Activated CD4-positive, alpha-beta T cell treated with anti-CD3 and anti-CD28 coated beads, Interleukin-2, amount 10 ng/mL, durations not matched to agents 24 days and 14 days (primary cell): ENCODE measurements at regions of chr20 and their contacts with region 1.

Region 1: GRCh38 chr20:57351042-57351783 is at the start of gene RAE1:
- DNase-seq: peak; percentile 98
- H3K4me3 Mint-ChIP-seq: peak within 1 kb of the TSS; percentile 95
- H3K27ac Mint-ChIP-seq: peak within 1 kb of the TSS; percentile 94
- H3K4me1 Mint-ChIP-seq: peaks cover 31% of the 10 kb centered on the region
- H3K27me3 Mint-ChIP-seq: peaks cover 6% of the 10 kb centered on the region
- total RNA-seq, gene RAE1: 58.2 and 63.4 TPM in 2 replicates

Region 2: GRCh38 chr20:56554869-56555268 is 796.3 kb before region 1 on chr20:
- intact Hi-C with region 1: loop called (anchors 1 kb)
- DNase-seq: peak; percentile 57
- H3K4me3 Mint-ChIP-seq: no peak overlapping the region
- H3K27ac Mint-ChIP-seq: peak overlapping the region; percentile 45
- H3K4me1 Mint-ChIP-seq: peaks cover 8% of the 10 kb centered on the region
- H3K27me3 Mint-ChIP-seq: peaks cover 3% of the 10 kb centered on the region

Region 3: DNA sequence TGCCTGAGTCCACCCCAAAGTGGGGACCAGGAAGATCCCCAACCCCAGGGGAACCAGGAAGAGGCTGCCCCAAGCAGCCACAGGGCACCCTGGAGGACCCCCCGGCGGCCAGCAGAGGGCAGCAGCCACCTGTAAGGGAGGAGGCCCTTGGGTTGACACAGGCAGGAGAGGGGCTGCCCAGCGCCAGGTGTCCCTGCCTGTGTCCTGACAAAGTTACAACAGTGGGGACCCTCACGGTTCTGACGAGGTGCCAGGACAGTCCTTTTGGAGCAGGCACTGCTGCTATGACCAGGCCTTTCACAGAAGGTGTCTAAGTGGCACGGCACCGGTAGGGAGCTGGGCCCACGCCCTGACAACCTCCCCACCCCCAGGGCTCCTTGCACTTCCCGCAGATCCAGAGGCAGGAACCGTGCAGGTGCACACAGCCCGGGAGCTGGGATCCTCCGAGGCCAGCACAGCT is 261.5 kb before region 1 on chr20:
- intact Hi-C with region 1: loop called (anchors 1 kb)
- DNase-seq: peak; percentile 89
- H3K4me3 Mint-ChIP-seq: no peak overlapping the region
- H3K27ac Mint-ChIP-seq: peak overlapping the region; percentile 81
- H3K4me1 Mint-ChIP-seq: peaks cover 11% of the 10 kb centered on the region
- H3K27me3 Mint-ChIP-seq: peaks cover 7% of the 10 kb centered on the region

Region 4: GRCh38 chr20:57335392-57335791 is 15.8 kb before region 1 on chr20:
- intact Hi-C with region 1: no loop called
- DNase-seq: no peak
- H3K4me3 Mint-ChIP-seq: no peak overlapping the region
- H3K27ac Mint-ChIP-seq: no peak overlapping the region
- H3K4me1 Mint-ChIP-seq: no peaks in the 10 kb centered on the region
- H3K27me3 Mint-ChIP-seq: peaks cover 33% of the 10 kb centered on the region

Region 5: GRCh38 chr20:57383447-57384347 is 32.5 kb after region 1 on chr20:
- intact Hi-C with region 1: loop called (anchors 2 kb)
- DNase-seq: no peak
- H3K4me3 Mint-ChIP-seq: no peak overlapping the region
- H3K27ac Mint-ChIP-seq: no peak overlapping the region
- H3K4me1 Mint-ChIP-seq: peaks cover 15% of the 10 kb centered on the region
- H3K27me3 Mint-ChIP-seq: no peaks in the 10 kb centered on the region

Region 6: DNA sequence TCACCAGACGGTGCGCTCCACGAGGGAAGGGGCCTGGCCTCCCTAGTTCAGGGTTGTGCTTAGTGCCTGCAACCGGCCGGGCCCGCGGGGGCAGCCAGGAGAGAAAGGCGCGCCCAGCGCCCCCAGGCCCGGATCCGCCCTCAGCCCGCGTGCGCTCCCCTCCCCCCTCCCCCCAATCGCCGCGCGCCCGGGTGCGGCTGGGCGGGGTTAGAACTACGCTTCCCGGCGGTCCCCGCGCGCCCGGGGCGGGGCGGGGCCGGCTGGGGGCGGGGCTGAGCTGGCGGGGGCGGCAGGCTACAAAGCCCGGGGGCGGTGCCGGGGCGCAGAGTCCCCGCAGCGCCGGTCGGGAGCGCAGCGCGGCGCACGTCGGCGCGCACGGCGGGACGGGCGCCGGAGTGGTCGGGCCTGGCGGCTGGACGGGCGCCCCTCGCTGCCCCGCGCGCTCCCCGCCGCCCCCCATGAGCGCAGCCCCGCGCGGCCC is 39.9 kb after region 1 on chr20 and contains the start of gene RBM38:
- intact Hi-C with region 1: loop called (anchors 1 kb)
- DNase-seq: peak; percentile 93
- H3K4me3 Mint-ChIP-seq: peak within 1 kb of the TSS; percentile 88
- H3K27ac Mint-ChIP-seq: peak within 1 kb of the TSS; percentile 98
- H3K4me1 Mint-ChIP-seq: peaks cover 33% of the 10 kb centered on the region
- H3K27me3 Mint-ChIP-seq: no peaks in the 10 kb centered on the region
- total RNA-seq, gene RBM38: 100 and 103 TPM in 2 replicates

Region 7: GRCh38 chr20:57596998-57597939 is 246.1 kb after region 1 on chr20:
- intact Hi-C with region 1: no loop called
- DNase-seq: peak; percentile 92
- H3K4me3 Mint-ChIP-seq: no peak overlapping the region
- H3K27ac Mint-ChIP-seq: peak overlapping the region; percentile 20
- H3K4me1 Mint-ChIP-seq: peaks cover 10% of the 10 kb centered on the region
- H3K27me3 Mint-ChIP-seq: peaks cover 34% of the 10 kb centered on the region

Region 8: DNA sequence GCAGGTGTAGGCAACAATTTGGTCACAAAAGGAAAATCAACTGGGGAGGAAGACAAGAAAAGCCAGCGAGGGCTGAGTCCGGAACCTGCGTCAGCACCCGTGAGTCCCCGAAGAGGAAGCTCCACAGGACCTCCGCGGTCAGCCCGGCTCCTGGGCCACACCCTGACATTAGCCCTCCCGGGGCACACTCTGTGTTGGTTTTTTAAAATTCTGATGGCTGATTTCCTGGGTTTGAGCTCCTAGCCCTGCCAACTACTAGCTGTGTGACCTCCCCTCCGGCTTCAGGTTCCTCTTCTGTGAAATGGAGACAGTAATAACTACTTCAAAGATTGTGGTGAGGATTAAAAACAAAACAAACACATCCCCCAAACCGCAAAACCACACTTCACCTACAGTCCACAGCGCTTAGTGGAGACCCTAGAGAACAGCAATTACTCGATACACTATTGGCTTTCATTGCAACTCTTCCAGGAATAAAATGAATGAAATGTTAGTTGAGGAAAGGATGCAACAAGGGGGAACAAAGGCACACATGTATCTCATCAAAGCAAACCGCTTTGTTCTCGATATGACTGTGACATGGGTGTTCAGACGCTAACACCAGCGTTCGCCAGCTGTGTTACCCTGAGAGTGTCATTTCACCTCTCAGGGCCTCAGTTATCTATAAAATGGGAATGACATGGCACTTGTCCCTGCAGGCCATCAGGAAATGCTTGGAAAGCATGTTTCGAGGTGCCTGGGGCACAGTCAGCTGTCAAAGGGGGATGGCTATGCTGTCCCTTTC is 268.0 kb after region 1 on chr20:
- intact Hi-C with region 1: loop called (anchors 2 kb)
- DNase-seq: peak; percentile 92
- H3K4me3 Mint-ChIP-seq: peak overlapping the region; percentile 78
- H3K27ac Mint-ChIP-seq: peak overlapping the region; percentile 87
- H3K4me1 Mint-ChIP-seq: peaks cover 54% of the 10 kb centered on the region
- H3K27me3 Mint-ChIP-seq: peaks cover 16% of the 10 kb centered on the region

Region 9: GRCh38 chr20:57709931-57710799 is 359.0 kb after region 1 on chr20 and contains the start of gene PMEPA1:
- intact Hi-C with region 1: loop called (anchors 1 kb)
- DNase-seq: peak; percentile 96
- H3K4me3 Mint-ChIP-seq: peak within 1 kb of the TSS; percentile 80
- H3K27ac Mint-ChIP-seq: peak within 1 kb of the TSS; percentile 29
- H3K4me1 Mint-ChIP-seq: peaks cover 16% of the 10 kb centered on the region
- H3K27me3 Mint-ChIP-seq: peaks cover 46% of the 10 kb centered on the region
- total RNA-seq, gene PMEPA1: 0.66 and 0.82 TPM in 2 replicates